Naive thymus-derived CD8-positive, alpha-beta T cell (primary cell): ENCODE measurements at regions of chr13 and their contacts with region 1.

Region 1: DNA sequence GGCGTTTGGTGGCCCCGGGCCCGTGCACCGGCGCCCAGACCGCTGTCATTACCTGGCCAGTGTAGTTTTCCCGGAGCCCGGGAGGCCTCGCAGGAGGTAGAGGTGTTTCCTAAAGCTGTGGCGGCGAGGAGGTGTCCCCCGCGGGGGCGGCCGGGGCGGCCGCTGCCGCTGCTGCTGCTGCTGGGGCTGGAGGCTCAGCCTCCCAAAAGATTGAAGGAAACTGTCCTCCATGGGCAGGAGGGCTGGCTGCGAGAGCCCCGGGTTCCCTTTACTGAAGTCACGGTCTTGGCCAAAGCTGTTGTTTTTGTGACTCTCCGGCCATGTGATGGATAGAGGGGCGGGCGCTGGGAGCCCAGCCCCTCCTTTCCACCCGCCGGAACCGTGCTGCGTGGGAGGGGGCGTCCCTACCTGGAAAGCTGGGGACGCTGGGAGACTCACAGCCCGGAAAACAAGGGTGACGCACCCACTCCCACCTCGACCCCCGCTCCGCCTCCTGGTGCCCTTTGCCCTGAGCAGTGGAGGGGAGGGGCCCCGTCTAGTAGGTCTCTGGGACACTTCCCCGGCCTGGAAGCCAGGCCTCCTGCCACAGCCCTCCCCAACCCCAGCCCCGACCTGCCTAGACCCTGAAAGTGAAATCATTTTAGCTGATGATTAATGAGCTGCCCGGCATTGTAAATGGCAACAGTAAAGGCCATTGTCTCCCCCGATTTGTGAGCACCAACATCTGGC is at the start of gene N4BP2L1:
- DNase-seq: peak; percentile 73 to 92 (median 84)
- ATAC-seq: peak; percentile 66 to 70
- H3K4me3 Mint-ChIP-seq: peak within 1 kb of the TSS; percentile 89 to 99 (median 95)
- H3K27ac Mint-ChIP-seq: peak within 1 kb of the TSS; percentile 97 to 100 (median 99)
- H3K4me1 Mint-ChIP-seq: peaks cover 33 to 53% (median 46%) of the 10 kb centered on the region in 4 donors
- H3K27me3 Mint-ChIP-seq: no peaks in the 10 kb centered on the region
- polyA plus RNA-seq, gene N4BP2L1: 55.3 to 72.1 (median 62.5) TPM

Region 2: GRCh38 chr13:32315238-32316027 is 112.6 kb before region 1 on chr13 and contains the starts of genes BRCA2 and ZAR1L:
- POLR2A ChIA-PET with region 1: interaction called, 58 read pairs
- DNase-seq: peak; percentile 80 to 93 (median 86)
- ATAC-seq: peak; percentile 93 to 96
- H3K4me3 Mint-ChIP-seq: peak within 1 kb of the TSS; percentile 90 to 100 (median 96)
- H3K27ac Mint-ChIP-seq: peak within 1 kb of the TSS; percentile 98 to 100 (median 100)
- H3K4me1 Mint-ChIP-seq: peaks cover 4 to 16% (median 9%) of the 10 kb centered on the region in 4 donors
- H3K27me3 Mint-ChIP-seq: no peaks in the 10 kb centered on the region
- polyA plus RNA-seq, gene BRCA2: 0.59 to 1.2 (median 1.0) TPM
- polyA plus RNA-seq, gene ZAR1L: not detected

Region 3: GRCh38 chr13:32390048-32390447 is 38.0 kb before region 1 on chr13:
- POLR2A ChIA-PET with region 1: interaction called, 14 read pairs
- DNase-seq: peak in 4 of 10 donors; percentile 19 to 61 (median 41)
- ATAC-seq: peak; percentile 94
- H3K4me3 Mint-ChIP-seq: peak overlapping the region; percentile 8 to 67 (median 40)
- H3K27ac Mint-ChIP-seq: peak overlapping the region in 8 of 10 donors; percentile 41 to 82 (median 54)
- H3K4me1 Mint-ChIP-seq: peaks cover 9 to 25% (median 22%) of the 10 kb centered on the region in 4 donors
- H3K27me3 Mint-ChIP-seq: no peaks in the 10 kb centered on the region

Region 4: DNA sequence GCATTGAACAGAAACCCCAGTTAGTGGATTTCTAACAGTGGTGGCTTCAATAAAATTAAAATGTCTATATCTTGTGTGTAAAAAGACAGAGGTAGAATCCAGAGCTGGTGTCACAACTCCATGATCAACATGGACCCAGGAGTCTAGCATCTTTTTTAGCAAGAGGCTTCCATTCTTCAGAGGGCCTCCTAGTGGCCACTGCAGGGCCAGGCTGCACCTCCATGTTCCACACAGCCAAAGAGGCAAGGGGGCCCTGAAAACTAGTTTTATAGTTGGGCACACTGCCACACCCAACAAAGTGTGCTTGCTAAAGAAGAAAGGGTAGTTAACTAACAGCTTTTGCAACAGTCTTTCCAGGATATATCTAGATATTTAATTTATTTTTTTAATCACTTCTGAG is 13.0 kb before region 1 on chr13:
- POLR2A ChIA-PET with region 1: no interaction called
- DNase-seq: peak in 1 of 10 donors; percentile 21
- ATAC-seq: peak; percentile 60 to 72
- H3K4me3 Mint-ChIP-seq: no peak overlapping the region
- H3K27ac Mint-ChIP-seq: peak overlapping the region in 2 of 10 donors; percentile 11 to 32
- H3K4me1 Mint-ChIP-seq: peaks cover 10 to 25% (median 16%) of the 10 kb centered on the region in 4 donors
- H3K27me3 Mint-ChIP-seq: no peaks in the 10 kb centered on the region

Region 5: GRCh38 chr13:32538621-32539246 is 110.7 kb after region 1 on chr13 and contains the start of gene N4BP2L2:
- POLR2A ChIA-PET with region 1: interaction called, 13 read pairs
- DNase-seq: peak; percentile 70 to 95 (median 90)
- ATAC-seq: peak; percentile 96
- H3K4me3 Mint-ChIP-seq: peak within 1 kb of the TSS; percentile 95 to 100 (median 97)
- H3K27ac Mint-ChIP-seq: peak within 1 kb of the TSS; percentile 98 to 100 (median 100)
- H3K4me1 Mint-ChIP-seq: peaks cover 18 to 52% (median 45%) of the 10 kb centered on the region in 4 donors
- H3K27me3 Mint-ChIP-seq: peaks cover 0 to 4% (median 0%) of the 10 kb centered on the region in 5 donors
- polyA plus RNA-seq, gene N4BP2L2: 126 to 186 (median 168) TPM

Region 6: DNA sequence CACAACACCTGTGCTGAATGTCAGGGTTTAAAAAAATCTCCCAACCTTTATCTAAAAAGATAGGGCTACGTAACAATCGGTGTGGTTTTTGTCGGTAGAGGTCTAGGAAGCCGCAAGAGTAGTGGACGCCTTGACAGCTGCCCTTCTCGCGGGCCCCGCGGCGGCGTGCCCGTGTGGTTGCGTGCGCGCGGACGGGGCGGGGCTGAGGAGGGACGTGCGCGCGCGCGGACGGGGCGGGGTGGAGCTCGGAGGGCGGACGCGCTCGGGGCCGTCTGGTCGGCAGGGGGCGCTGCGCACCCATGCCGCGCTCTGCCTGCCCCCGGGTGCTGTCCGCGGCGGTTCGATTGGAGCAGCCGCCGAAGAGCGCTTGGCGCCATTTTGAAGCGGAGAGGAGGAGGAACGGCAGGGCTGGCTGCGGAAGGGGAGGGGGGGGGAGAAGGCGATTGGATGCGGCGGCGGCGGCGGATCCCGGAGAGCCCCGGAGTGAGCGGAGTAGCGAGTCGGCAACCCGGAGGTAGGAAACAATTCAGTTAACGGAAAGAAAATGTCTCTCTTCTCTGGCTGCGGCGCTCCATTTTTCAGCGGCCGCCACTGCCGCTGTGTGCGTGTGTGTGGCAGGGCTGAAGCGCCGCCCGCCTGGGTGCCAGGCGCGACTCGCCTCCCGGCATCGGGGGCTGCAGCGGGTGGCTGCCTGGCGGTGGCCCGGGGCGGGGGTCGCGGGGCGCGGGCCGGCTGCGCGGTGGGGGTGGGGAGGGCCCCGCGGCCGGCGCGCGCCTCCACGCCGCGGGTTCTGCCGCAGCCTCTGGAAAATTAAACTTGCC is 158.3 kb after region 1 on chr13 and contains the start of gene PDS5B:
- POLR2A ChIA-PET with region 1: interaction called, 10 read pairs
- DNase-seq: peak; percentile 92 to 99 (median 95)
- ATAC-seq: peak; percentile 88 to 91
- H3K4me3 Mint-ChIP-seq: peak within 1 kb of the TSS; percentile 93 to 99 (median 97)
- H3K27ac Mint-ChIP-seq: peak within 1 kb of the TSS; percentile 94 to 98 (median 96)
- H3K4me1 Mint-ChIP-seq: peaks cover 27 to 42% (median 41%) of the 10 kb centered on the region in 4 donors
- H3K27me3 Mint-ChIP-seq: no peaks in the 10 kb centered on the region
- polyA plus RNA-seq, gene PDS5B: 32.0 to 38.1 (median 34.7) TPM